Mammary epithelial cell (primary cell): ENCODE measurements at regions of chr17 and their contacts with region 1.

Region 1: DNA sequence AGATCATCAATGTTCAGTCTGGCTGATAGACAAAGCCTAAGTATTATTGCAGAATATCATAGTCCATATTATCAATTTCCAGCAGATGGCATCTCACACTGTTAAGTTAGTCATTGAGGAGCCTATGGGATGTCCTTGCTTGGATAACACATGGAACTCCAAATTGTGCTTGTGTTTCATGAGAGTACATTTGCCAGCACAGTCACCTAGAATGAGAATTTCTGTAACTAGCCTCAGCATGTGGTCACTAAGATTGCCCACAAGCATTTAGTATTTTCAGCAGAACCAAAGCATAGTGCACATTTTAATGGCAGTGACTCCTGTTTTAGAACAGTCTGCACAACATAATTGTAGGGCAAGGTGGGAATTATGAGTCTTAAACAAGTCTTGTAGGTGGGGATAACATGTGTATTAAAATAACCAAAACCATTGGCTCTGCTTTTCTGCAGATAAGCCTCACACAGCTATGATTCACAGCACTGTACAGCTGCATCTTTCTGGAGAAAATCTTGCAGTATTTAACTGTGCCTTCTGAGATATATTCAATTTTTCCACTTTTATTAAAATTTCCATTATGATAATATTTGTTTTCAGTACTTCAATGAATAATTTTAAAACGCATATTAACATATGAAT is 882.8 kb upstream of the SOX9 start:
- DNase-seq: peak; percentile 83
- H3K4me3 ChIP-seq: no peak overlapping the region
- H3K27ac ChIP-seq: no peak overlapping the region
- H3K4me1 ChIP-seq: peaks cover 9% of the 10 kb centered on the region
- H3K27me3 ChIP-seq: no peaks in the 10 kb centered on the region
- CTCF ChIP-seq: peak; percentile 49 to 57

Region 2: GRCh38 chr17:71118039-71118438 is 120.0 kb before region 1 on chr17:
- CTCF ChIA-PET with region 1: no interaction called
- dilution Hi-C with region 1: no loop called
- in situ Hi-C with region 1: no loop called
- intact Hi-C with region 1: loop called (anchors 2 kb)
- DNase-seq: peak; percentile 62
- H3K4me3 ChIP-seq: no peak overlapping the region
- H3K27ac ChIP-seq: peak overlapping the region; percentile 15
- H3K4me1 ChIP-seq: peaks cover 11% of the 10 kb centered on the region
- H3K27me3 ChIP-seq: no peaks in the 10 kb centered on the region
- CTCF ChIP-seq: peak; percentile 68 to 73

Region 3: GRCh38 chr17:71423871-71424546 is 186.0 kb after region 1 on chr17:
- CTCF ChIA-PET with region 1: no interaction called
- dilution Hi-C with region 1: no loop called
- in situ Hi-C with region 1: no loop called
- intact Hi-C with region 1: loop called (anchors 5 kb)
- DNase-seq: peak; percentile 99
- H3K4me3 ChIP-seq: no peak overlapping the region
- H3K27ac ChIP-seq: peak overlapping the region; percentile 96
- H3K4me1 ChIP-seq: peaks cover 31% of the 10 kb centered on the region
- H3K27me3 ChIP-seq: no peaks in the 10 kb centered on the region
- CTCF ChIP-seq: peak in 1 of 2 donors; percentile 38

Region 4: GRCh38 chr17:71460943-71461342 is 222.9 kb after region 1 on chr17:
- CTCF ChIA-PET with region 1: no interaction called
- dilution Hi-C with region 1: no loop called
- in situ Hi-C with region 1: loop called in 1 of 2 experiments (anchors 25 kb)
- intact Hi-C with region 1: loop called (anchors 1 kb)
- DNase-seq: no peak
- H3K4me3 ChIP-seq: no peak overlapping the region
- H3K27ac ChIP-seq: no peak overlapping the region
- H3K4me1 ChIP-seq: peaks cover 41% of the 10 kb centered on the region
- H3K27me3 ChIP-seq: no peaks in the 10 kb centered on the region
- CTCF ChIP-seq: peak; percentile 20 to 36

Region 5: DNA sequence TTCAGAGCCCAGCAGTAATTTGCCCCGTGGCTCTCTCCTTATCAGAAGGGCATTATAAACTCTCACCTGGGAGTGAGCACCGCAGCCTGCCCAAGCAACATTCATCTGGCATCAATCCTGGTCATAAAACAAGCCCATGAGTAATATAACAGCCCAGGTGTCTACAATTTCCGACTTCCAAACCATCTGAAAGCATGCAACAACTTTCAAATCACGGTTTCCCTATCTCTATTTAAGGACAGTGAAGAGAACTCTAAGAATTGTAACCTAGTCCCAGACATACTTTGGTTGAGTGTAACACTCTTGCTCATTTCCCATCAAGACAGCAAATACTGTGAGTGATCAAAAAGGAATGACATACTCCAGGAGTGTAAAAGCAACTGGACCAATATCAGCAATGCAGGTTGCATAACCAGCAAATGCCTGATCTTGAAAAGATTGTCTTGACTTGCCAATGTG is 395.4 kb after region 1 on chr17:
- CTCF ChIA-PET with region 1: no interaction called
- dilution Hi-C with region 1: no loop called
- in situ Hi-C with region 1: no loop called
- intact Hi-C with region 1: loop called (anchors 5 kb)
- DNase-seq: peak; percentile 99
- H3K4me3 ChIP-seq: peak overlapping the region in 1 of 3 experiments; percentile 14
- H3K27ac ChIP-seq: peak overlapping the region; percentile 75
- H3K4me1 ChIP-seq: peaks cover 43% of the 10 kb centered on the region
- H3K27me3 ChIP-seq: no peaks in the 10 kb centered on the region
- CTCF ChIP-seq: no peak

Region 6: DNA sequence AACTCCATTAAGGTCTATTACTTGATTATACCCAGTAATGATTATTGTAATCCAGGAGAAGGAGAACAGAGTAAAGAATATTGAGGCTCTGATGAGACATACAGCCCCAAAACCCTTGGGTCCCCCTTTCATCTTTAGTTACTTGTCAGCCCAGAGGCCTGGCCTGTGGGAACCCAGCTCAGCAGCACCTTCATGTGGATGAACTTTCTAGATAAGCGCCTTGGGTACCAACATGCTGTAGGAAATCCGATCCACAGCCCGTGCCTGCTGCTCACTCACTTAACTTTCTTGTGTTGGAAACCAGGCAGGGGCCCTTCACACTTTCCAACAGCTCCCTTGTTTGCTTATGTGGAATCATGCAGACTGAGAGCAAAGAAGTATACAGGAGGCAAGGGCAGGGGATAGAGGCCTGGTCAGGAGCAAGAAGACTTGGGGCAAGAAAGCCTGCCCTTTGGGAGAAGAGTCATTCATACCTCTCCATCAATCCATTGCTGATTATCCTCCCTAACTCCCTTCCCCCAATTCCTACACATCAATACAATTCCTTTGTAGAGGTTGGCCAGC is 818.8 kb after region 1 on chr17:
- CTCF ChIA-PET with region 1: no interaction called
- dilution Hi-C with region 1: no loop called
- in situ Hi-C with region 1: no loop called
- intact Hi-C with region 1: loop called (anchors 1 kb)
- DNase-seq: peak; percentile 68
- H3K4me3 ChIP-seq: peak overlapping the region in 1 of 3 experiments; percentile 13
- H3K27ac ChIP-seq: no peak overlapping the region
- H3K4me1 ChIP-seq: peaks cover 42% of the 10 kb centered on the region
- H3K27me3 ChIP-seq: no peaks in the 10 kb centered on the region
- CTCF ChIP-seq: peak in 1 of 2 donors; percentile 41